PC-3 (cell line): ENCODE measurements at regions of chr10 and their contacts with region 1.

Region 1: DNA sequence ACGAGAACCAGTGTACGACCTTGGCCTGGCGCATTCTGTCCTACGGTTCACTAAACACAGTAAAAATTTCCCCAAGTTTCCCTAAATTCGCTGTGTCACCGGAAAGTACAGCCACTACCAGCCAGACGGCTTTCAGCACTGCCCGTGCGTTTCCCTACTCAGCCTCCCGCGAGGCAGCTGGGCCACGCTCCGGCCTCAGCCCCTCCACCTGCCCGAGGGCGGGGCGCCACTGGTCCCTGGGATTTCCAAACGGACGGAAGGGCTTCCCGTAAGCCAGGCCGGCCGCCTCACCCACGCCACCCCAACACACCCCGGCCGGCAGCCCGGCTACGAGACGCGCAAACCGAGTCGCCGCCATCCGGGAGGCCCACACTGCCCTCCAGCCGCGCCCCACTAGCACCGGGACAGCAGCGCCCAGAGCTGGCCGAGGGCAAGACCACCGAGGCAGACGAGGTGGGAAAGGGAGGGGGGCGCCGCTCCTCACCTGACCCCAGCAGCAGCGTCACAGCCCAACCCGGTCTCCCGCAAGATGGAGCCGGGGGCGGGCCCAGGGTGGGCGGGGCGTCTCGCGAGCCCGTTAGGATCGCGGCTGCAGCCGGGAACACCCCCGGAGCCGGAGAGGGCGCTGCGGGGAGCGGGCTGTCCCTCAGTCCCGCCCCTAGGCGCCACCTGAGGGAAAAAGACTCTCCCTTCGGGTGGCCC is at the start of gene ANXA7:
- DNase-seq: peak; percentile 100
- ATAC-seq: peak; percentile 86
- H3K4me3 ChIP-seq: peak within 1 kb of the TSS; percentile 65
- H3K27ac ChIP-seq: peak within 1 kb of the TSS; percentile 73
- H3K4me1 ChIP-seq: peaks cover 64% of the 10 kb centered on the region
- H3K27me3 ChIP-seq: no peaks in the 10 kb centered on the region
- CTCF ChIP-seq: peak; percentile 62
- total RNA-seq, gene ANXA7: 478 and 561 TPM in 2 replicates

Region 2: GRCh38 chr10:72875250-72876055 is 538.2 kb before region 1 on chr10:
- CTCF ChIA-PET with region 1: no interaction called
- POLR2A ChIA-PET with region 1: no interaction called
- intact Hi-C with region 1: loop called (anchors 1 kb)
- DNase-seq: peak; percentile 98
- ATAC-seq: peak; percentile 86
- H3K4me3 ChIP-seq: no peak overlapping the region
- H3K27ac ChIP-seq: no peak overlapping the region
- H3K4me1 ChIP-seq: peaks cover 3% of the 10 kb centered on the region; the same call in 1 of the 2 replicates
- H3K27me3 ChIP-seq: peaks cover 30% of the 10 kb centered on the region
- CTCF ChIP-seq: peak; percentile 100

Region 3: GRCh38 chr10:73252445-73253224 is 161.0 kb before region 1 on chr10 and contains the start of gene MRPS16:
- CTCF ChIA-PET with region 1: interaction called, 3 read pairs
- POLR2A ChIA-PET with region 1: interaction called, 11 read pairs
- intact Hi-C with region 1: loop called (anchors 1 kb)
- DNase-seq: peak; percentile 100
- ATAC-seq: peak; percentile 86
- H3K4me3 ChIP-seq: peak within 1 kb of the TSS; percentile 76
- H3K27ac ChIP-seq: peak within 1 kb of the TSS; percentile 80
- H3K4me1 ChIP-seq: peaks cover 37% of the 10 kb centered on the region
- H3K27me3 ChIP-seq: no peaks in the 10 kb centered on the region
- CTCF ChIP-seq: no peak
- total RNA-seq, gene MRPS16: 230 and 275 TPM in 2 replicates

Region 4: GRCh38 chr10:73358331-73359279 is 55.1 kb before region 1 on chr10 and contains the start of gene CFAP70:
- CTCF ChIA-PET with region 1: no interaction called
- POLR2A ChIA-PET with region 1: interaction called, 15 read pairs
- intact Hi-C with region 1: loop called (anchors 1 kb)
- DNase-seq: peak; percentile 100
- ATAC-seq: peak; percentile 93
- H3K4me3 ChIP-seq: peak within 1 kb of the TSS; percentile 66
- H3K27ac ChIP-seq: no peak within 1 kb of the TSS
- H3K4me1 ChIP-seq: peaks cover 16% of the 10 kb centered on the region
- H3K27me3 ChIP-seq: peaks cover 9% of the 10 kb centered on the region
- CTCF ChIP-seq: no peak
- total RNA-seq, gene CFAP70: 0.73 and 0.92 TPM in 2 replicates

Region 5: DNA sequence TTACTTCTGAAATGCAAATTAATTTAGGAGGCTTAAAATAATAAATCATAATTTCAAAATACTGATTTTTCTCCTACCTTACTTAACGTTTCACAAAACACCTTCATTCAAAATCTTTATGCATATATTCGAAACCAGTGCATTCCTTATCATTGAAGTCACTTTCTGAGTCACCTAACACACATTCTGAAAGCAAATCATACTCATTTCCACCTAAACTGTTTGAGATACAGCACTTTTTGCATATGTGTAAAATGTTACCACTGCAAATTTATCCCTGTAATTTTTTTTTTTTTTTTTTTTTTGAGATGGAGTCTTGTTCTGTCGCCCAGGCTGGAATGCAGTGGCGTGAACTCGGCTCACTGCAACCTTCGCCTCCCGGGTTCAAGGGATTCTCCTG is 66.5 kb after region 1 on chr10:
- CTCF ChIA-PET with region 1: no interaction called
- POLR2A ChIA-PET with region 1: no interaction called
- intact Hi-C with region 1: no loop called
- DNase-seq: peak; percentile 98
- ATAC-seq: peak; percentile 89
- H3K4me3 ChIP-seq: peak overlapping the region; percentile 0; the same call in 1 of the 2 replicates
- H3K27ac ChIP-seq: no peak overlapping the region
- H3K4me1 ChIP-seq: peaks cover 19% of the 10 kb centered on the region
- H3K27me3 ChIP-seq: no peaks in the 10 kb centered on the region
- CTCF ChIP-seq: no peak

Region 6: DNA sequence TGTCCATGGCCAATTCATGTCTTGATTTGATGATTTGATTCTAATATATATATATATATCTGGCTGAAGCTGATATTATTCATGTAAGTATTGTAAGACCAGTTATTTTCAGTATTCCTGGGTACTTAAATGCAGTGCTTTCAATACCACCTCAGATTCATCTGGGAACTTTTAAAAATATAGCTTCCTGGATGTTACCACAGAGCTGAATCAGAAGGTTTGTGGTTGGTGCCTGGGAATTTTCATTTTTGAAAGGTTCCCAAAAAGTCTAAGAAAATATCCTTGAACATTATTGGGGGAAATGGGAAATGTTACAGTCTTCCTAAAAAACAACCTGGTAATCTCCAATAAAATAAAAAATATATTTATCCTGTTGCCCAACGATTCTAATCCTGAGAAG is 92.8 kb after region 1 on chr10:
- CTCF ChIA-PET with region 1: no interaction called
- POLR2A ChIA-PET with region 1: interaction called, 10 read pairs
- intact Hi-C with region 1: no loop called
- DNase-seq: no peak
- ATAC-seq: no peak
- H3K4me3 ChIP-seq: no peak overlapping the region
- H3K27ac ChIP-seq: no peak overlapping the region
- H3K4me1 ChIP-seq: peaks cover 4% of the 10 kb centered on the region
- H3K27me3 ChIP-seq: no peaks in the 10 kb centered on the region
- CTCF ChIP-seq: no peak

Region 7: GRCh38 chr10:73644015-73644743 is 230.5 kb after region 1 on chr10:
- CTCF ChIA-PET with region 1: no interaction called
- POLR2A ChIA-PET with region 1: no interaction called
- intact Hi-C with region 1: loop called (anchors 2 kb)
- DNase-seq: peak; percentile 99
- ATAC-seq: peak; percentile 86
- H3K4me3 ChIP-seq: no peak overlapping the region
- H3K27ac ChIP-seq: no peak overlapping the region
- H3K4me1 ChIP-seq: no peaks in the 10 kb centered on the region
- H3K27me3 ChIP-seq: no peaks in the 10 kb centered on the region
- CTCF ChIP-seq: peak; percentile 100

Region 8: DNA sequence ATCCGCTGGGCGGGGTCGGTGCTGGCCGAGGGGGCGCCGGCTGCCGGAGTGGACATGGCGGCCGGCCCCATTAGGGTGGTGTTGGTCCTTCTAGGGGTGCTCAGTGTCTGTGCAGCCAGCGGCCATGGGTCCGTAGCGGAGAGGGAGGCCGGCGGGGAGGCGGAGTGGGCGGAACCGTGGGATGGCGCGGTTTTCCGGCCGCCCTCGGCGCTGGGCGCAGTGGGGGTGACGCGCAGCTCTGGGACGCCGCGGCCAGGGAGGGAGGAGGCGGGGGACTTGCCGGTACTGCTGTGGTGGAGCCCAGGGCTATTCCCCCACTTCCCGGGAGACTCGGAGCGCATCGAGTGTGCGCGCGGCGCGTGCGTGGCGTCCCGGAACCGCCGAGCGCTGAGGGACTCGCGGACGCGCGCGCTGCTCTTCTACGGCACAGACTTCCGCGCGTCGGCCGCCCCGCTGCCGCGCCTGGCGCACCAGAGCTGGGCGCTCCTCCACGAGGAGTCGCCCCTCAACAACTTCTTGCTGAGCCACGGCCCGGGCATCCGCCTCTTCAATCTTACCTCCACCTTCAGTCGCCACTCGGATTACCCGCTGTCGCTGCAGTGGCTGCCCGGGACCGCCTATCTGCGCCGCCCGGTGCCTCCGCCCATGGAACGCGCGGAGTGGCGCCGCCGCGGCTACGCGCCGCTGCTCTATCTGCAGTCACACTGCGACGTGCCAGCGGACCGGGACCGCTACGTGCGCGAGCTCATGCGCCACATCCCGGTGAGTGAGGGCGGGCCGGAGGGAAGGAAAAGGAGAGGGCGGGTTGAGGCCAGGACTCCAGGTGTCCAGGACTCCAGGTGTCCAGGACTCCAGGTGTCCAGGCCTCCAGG is 358.8 kb after region 1 on chr10:
- CTCF ChIA-PET with region 1: no interaction called
- POLR2A ChIA-PET with region 1: interaction called, 16 read pairs
- intact Hi-C with region 1: no loop called
- DNase-seq: peak; percentile 99
- ATAC-seq: peak; percentile 66
- H3K4me3 ChIP-seq: peak overlapping the region; percentile 73
- H3K27ac ChIP-seq: peak overlapping the region; percentile 71
- H3K4me1 ChIP-seq: peaks cover 26% of the 10 kb centered on the region
- H3K27me3 ChIP-seq: no peaks in the 10 kb centered on the region
- CTCF ChIP-seq: peak; percentile 53